ENCODE measurements at regions of chr12 and their contacts with region 1.

Region 1: GRCh38 chr12:104215638-104216297 is at the start of gene TXNRD1:
- DNase-seq: peak; percentile 75 to 88
- ATAC-seq: peak; percentile 92
- total RNA-seq, gene TXNRD1: 79.5 to 97.9 TPM

Region 2: GRCh38 chr12:104280703-104281458 is 65.1 kb after region 1 on chr12:
- intact Hi-C with region 1: loop called in 1 of 2 experiments (anchors 5 kb)
- DNase-seq: no peak
- ATAC-seq: no peak

Region 3: DNA sequence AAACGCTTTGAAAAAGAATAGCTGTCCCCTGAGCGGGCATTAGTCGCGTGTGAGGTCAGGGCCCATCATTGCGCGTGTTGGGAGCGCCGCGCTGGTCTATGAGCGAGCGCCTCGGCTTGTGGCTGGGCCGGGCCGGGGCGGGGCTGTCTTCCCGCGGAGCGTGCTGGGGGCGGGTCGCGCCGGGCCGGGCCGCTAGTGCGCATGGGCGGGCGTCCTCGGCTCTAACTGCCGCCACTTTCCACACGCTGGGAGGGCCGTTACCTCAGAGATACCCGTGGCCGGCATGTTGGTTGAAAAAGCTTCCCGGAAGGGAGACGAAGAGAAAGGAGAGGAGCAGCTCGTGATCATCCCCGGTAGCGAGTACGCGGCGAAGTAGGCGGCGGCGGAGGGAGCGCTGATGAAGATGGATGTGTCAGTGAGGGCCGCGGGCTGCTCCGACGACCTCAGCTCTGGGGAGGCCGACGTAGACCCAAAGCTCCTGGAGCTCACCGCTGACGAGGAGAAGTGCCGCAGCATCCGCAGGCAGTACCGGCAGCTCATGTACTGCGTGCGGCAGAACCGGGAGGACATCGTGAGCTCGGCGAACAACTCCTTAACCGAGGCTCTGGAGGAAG is 87.9 kb after region 1 on chr12 and contains the start of gene EID3:
- intact Hi-C with region 1: loop called in 1 of 2 experiments (anchors 5 kb)
- DNase-seq: peak; percentile 85 to 92
- ATAC-seq: peak; percentile 96
- total RNA-seq, gene EID3: 2.4 to 2.5 TPM